MCF 10A (cell line): ENCODE measurements at regions of chr15 and their contacts with region 1.

Region 1: DNA sequence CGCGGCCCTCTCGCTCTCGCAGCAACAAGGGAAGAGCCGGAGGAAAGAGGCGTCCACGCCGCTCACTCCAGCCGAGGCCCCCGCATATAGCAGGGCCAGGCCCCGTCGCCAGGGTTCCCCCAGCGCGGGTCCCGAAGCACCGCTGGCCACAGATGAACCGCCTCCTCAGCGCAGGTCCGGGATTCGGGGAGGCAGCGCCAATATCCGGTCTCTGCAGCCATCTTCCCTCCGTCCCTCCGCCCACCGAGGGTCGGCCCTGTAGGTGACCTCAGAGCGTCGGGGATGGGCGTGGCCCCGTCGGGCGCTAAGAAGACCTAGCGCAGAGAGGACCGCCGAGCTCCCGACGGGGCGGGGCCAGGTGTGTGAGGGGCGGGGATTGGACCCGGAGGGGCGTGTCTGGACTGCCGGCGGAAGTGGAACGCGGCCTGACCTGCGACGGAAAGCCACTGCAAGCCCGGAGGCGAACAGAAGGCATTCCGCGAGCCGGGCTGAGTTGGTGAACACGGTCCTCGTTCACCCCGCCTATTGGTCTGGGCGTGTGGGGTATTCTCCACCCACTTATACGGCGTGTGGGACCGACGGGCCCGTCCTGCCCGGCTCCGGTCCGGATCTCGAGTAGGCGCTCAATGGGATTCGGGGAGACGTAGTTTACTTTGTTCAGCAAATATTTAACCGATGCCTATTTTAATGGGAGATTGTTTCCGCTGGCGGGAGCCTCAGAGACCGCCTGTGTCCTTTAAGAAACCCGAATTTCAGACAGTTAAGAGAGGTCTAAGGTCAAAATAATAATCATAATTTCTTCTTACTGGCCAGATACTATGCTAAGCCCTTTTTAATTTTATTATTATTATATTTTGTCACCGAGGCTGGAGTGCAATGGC is 26.9 kb upstream of the MTHFS start:
- DNase-seq: peak; percentile 96
- H3K4me3 Mint-ChIP-seq: peak overlapping the region; percentile 97
- H3K27ac Mint-ChIP-seq: peak overlapping the region; percentile 97
- H3K4me1 Mint-ChIP-seq: peaks cover 8% of the 10 kb centered on the region
- H3K27me3 Mint-ChIP-seq: peaks cover under 1% of the 10 kb centered on the region
- CTCF ChIP-seq: no peak

Region 2: GRCh38 chr15:79811406-79812405 is 112.0 kb before region 1 on chr15:
- CTCF ChIA-PET with region 1: no interaction called
- POLR2A ChIA-PET with region 1: no interaction called
- intact Hi-C with region 1: no loop called
- DNase-seq: peak; percentile 94
- H3K4me3 Mint-ChIP-seq: peak overlapping the region; percentile 4
- H3K27ac Mint-ChIP-seq: peak overlapping the region; percentile 4
- H3K4me1 Mint-ChIP-seq: peaks cover 18% of the 10 kb centered on the region
- H3K27me3 Mint-ChIP-seq: no peaks in the 10 kb centered on the region
- CTCF ChIP-seq: no peak

Region 3: GRCh38 chr15:79824136-79824701 is 99.5 kb before region 1 on chr15:
- CTCF ChIA-PET with region 1: no interaction called
- POLR2A ChIA-PET with region 1: no interaction called
- intact Hi-C with region 1: no loop called
- DNase-seq: no peak
- H3K4me3 Mint-ChIP-seq: no peak overlapping the region
- H3K27ac Mint-ChIP-seq: no peak overlapping the region
- H3K4me1 Mint-ChIP-seq: no peaks in the 10 kb centered on the region
- H3K27me3 Mint-ChIP-seq: no peaks in the 10 kb centered on the region
- CTCF ChIP-seq: no peak

Region 4: DNA sequence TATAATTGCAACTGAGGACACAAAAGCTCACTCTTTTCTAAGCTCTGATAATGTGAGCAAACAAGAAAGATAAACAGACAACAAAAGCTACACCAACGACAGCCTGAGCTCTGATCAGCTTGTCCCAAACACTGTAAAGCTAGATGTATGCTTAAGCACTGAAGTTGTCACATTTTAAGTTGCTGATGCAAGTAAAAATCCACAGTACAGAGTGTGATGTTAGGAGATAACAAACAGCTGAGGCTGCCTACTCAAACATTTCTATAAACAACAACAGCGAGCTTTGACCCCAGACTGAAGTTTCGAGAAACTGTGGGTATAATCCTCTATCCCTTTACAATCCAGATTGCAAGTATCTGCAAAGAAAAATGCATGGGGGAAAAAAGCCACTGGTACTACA is 37.6 kb before region 1 on chr15:
- CTCF ChIA-PET with region 1: no interaction called
- POLR2A ChIA-PET with region 1: interaction called, 10 read pairs
- intact Hi-C with region 1: no loop called
- DNase-seq: no peak
- H3K4me3 Mint-ChIP-seq: no peak overlapping the region
- H3K27ac Mint-ChIP-seq: no peak overlapping the region
- H3K4me1 Mint-ChIP-seq: no peaks in the 10 kb centered on the region
- H3K27me3 Mint-ChIP-seq: no peaks in the 10 kb centered on the region
- CTCF ChIP-seq: no peak

Region 5: DNA sequence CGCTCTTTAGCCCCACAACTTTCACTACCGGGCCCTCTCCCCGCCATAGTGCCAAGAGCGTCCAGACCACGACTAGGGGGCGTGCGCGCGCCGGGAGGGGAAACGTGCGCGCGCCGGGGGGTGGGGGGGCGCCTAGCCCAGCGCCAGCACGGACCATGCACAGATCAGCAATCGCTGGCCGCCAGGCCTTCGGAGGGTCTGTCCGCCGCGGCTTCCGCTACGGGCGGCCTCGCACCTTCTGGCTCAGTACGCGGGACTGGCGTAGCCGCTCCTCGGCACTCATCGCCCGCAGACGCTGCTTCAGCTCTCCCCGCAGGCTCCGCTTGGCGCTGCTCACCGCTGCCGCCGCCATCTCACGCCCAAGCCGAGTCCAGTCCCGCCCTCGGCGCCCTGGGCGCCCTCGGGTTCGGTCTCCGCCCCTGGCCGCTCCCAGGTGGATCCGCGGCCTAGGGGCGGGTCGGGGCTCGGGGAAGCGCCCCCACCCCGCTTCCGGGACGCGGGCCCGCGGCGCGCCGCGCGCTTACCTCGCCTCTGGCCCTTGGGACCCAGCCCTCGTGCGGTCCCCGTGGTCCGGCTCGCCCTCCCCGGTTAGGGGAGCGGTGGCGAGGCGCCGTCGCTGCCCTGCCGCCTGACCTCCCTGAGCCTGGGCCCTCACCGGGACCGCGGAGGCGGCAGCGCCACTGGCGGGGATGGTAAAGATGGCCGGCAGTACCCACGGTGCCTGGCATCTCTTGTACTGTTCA is 26.9 kb before region 1 on chr15 and contains the start of gene MTHFS:
- CTCF ChIA-PET with region 1: no interaction called
- POLR2A ChIA-PET with region 1: interaction called, 63 read pairs
- intact Hi-C with region 1: no loop called
- DNase-seq: peak; percentile 75
- H3K4me3 Mint-ChIP-seq: peak within 1 kb of the TSS; percentile 84
- H3K27ac Mint-ChIP-seq: peak within 1 kb of the TSS; percentile 85
- H3K4me1 Mint-ChIP-seq: peaks cover 38% of the 10 kb centered on the region
- H3K27me3 Mint-ChIP-seq: no peaks in the 10 kb centered on the region
- CTCF ChIP-seq: peak; percentile 45
- total RNA-seq, gene MTHFS: 28.5 and 34.5 TPM in 2 replicates

Region 6: GRCh38 chr15:79904271-79904670 is 19.5 kb before region 1 on chr15:
- CTCF ChIA-PET with region 1: interaction called, 3 read pairs
- POLR2A ChIA-PET with region 1: interaction called, 63 read pairs
- intact Hi-C with region 1: no loop called
- DNase-seq: peak; percentile 22
- H3K4me3 Mint-ChIP-seq: no peak overlapping the region
- H3K27ac Mint-ChIP-seq: peak overlapping the region; percentile 37
- H3K4me1 Mint-ChIP-seq: peaks cover 11% of the 10 kb centered on the region
- H3K27me3 Mint-ChIP-seq: no peaks in the 10 kb centered on the region
- CTCF ChIP-seq: no peak

Region 7: GRCh38 chr15:80475572-80475971 is 551.8 kb after region 1 on chr15:
- CTCF ChIA-PET with region 1: no interaction called
- POLR2A ChIA-PET with region 1: no interaction called
- intact Hi-C with region 1: no loop called
- DNase-seq: no peak
- H3K4me3 Mint-ChIP-seq: no peak overlapping the region
- H3K27ac Mint-ChIP-seq: no peak overlapping the region
- H3K4me1 Mint-ChIP-seq: no peaks in the 10 kb centered on the region
- H3K27me3 Mint-ChIP-seq: no peaks in the 10 kb centered on the region
- CTCF ChIP-seq: peak; percentile 14